Gastrocnemius medialis (tissue), 4 donors: ENCODE measurements at regions of chr14 and their contacts with region 1.

Region 1: DNA sequence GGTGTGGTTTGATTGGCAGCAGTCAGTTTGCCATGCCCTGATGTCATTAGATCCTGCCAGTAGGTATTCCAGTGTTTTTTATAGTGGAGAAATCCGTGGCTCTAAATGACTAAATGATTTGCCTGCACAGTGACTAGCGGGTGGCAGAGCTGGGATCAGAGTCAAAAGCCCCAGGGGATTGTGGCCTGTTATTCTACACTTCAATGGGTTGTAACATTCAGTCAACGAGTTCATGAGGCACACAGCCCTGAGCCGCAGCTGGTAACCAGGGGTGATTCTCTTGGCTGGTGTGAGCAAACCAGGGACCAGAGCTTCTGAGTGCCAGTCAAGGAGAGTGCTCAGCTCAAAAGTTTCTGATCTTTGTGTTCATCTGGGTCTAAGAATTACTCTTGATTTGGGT is 1.8 kb downstream of the MYH6 start:
- DNase-seq: peak in 1 of 2 donors; percentile 62
- ATAC-seq: peak; percentile 2 to 38
- H3K4me3 ChIP-seq: peak overlapping the region in 2 of 4 donors; percentile 18 to 47
- H3K27ac ChIP-seq: peak overlapping the region; percentile 79 to 90 (median 84)
- H3K4me1 ChIP-seq: peaks cover 10 to 41% of the 10 kb centered on the region in 2 donors
- H3K27me3 ChIP-seq: no peaks in the 10 kb centered on the region
- CTCF ChIP-seq: no peak
- POLR2A ChIP-seq: no peak

Region 2: DNA sequence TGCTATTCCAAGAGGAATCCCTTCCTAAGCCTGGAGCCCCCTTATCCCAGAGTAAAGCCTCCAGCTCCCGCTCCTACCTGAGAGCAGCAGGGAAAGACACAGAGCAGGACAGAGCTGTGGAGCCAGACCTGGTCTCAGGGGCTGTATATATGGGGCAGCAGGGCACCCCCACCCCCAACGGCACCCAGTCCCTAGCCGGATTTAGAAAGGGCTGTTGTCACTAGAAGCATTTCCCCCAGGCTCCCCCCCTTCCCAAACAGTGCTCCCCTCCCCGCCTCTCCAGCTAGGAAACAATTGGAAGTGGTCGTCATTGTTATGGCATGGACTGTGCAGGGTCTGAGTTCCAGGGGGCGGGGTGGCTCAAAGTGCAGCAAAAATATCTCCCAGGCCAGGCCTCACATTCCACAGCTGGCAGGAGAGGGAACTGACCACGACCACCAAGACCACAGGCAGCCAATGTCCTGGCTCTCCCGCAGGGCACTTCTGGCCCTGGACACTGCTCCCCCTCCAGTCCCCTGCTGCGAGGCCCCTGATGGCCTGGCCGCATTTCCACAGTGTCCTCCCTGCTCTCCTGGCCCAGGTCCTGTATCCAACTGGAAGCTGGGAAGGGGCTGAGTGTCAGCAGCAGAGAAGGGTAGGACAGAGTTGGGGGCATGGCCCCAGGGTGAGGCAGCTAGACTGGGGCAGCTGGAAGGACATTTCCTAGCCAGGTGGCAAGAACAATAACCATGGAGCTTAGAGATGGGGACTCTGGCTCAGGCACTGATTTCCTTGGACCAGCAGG is 29.5 kb after region 1 on chr14 and contains the start of gene MYH7:
- in situ Hi-C with region 1: no loop called
- intact Hi-C with region 1: loop called (anchors 2 kb)
- DNase-seq: peak in 1 of 2 donors; percentile 38
- ATAC-seq: no peak
- H3K4me3 ChIP-seq: peak within 1 kb of the TSS in 1 of 4 donors; percentile 17
- H3K27ac ChIP-seq: peak within 1 kb of the TSS; percentile 83 to 89 (median 86)
- H3K4me1 ChIP-seq: peaks cover 53 to 68% of the 10 kb centered on the region in 2 donors
- H3K27me3 ChIP-seq: no peaks in the 10 kb centered on the region
- CTCF ChIP-seq: no peak
- POLR2A ChIP-seq: no peak
- total RNA-seq, gene MYH7: 1,360 to 5,274 (median 3,359) TPM

Region 3: GRCh38 chr14:23446291-23446851 is 40.1 kb after region 1 on chr14:
- in situ Hi-C with region 1: no loop called
- intact Hi-C with region 1: loop called (anchors 2 kb)
- DNase-seq: peak; percentile 47 to 80
- ATAC-seq: peak; percentile 64 to 70
- H3K4me3 ChIP-seq: no peak overlapping the region
- H3K27ac ChIP-seq: peak overlapping the region; percentile 83 to 89 (median 86)
- H3K4me1 ChIP-seq: peaks cover 25 to 42% of the 10 kb centered on the region in 2 donors
- H3K27me3 ChIP-seq: no peaks in the 10 kb centered on the region
- CTCF ChIP-seq: peak in 2 of 5 experiments; percentile 46 to 54
- POLR2A ChIP-seq: no peak